ENCODE measurements at regions of chr14 and their contacts with region 1.

Region 1: DNA sequence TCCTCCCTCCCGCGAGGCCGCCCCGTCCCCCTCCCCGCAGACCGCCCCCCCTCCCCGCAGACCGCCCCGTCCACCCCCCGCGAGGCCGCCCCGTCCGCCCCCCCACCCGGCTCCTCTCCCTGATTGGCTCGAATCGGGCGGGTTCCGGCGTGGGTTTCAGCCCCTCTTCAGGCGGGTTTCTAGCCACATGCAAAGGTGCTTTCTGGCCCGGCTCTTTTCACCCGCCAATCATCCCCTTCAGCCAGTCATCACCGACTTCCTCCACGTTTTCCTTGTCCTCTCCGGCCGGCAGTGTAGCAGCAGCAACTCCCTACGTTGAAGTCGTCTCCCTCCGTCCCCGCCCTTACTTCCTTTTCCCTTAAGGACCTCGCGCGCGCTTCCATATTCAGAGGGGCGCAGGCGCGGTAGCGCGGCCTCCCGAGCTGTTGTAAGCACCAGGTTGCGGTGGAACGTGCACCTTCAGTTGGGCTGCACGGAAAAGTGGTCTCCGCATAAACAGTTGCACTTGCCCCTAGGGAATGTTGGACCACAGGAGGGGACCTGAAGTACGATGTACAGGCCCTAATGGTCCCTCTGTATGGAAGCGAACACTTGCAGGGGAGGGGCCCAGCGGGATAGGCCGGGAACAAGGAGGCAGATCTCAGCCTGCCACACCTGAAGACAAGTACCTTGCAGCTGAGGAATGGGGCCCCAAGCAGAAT is 44.6 kb upstream of the ESR2 start:
- DNase-seq: peak; percentile 76
- ATAC-seq: peak; percentile 87
- H3K4me3 Mint-ChIP-seq: peak overlapping the region; percentile 94
- H3K27ac Mint-ChIP-seq: peak overlapping the region; percentile 94
- H3K4me1 Mint-ChIP-seq: peaks cover 31% of the 10 kb centered on the region
- H3K27me3 Mint-ChIP-seq: no peaks in the 10 kb centered on the region
- CTCF ChIP-seq: no peak

Region 2: GRCh38 chr14:63641473-63642228 is 697.1 kb before region 1 on chr14 and contains the start of gene WDR89:
- CTCF ChIA-PET with region 1: no interaction called
- POLR2A ChIA-PET with region 1: interaction called, 3 read pairs
- intact Hi-C with region 1: loop called (anchors 1 kb)
- DNase-seq: peak; percentile 84
- ATAC-seq: peak; percentile 83
- H3K4me3 Mint-ChIP-seq: peak within 1 kb of the TSS; percentile 92
- H3K27ac Mint-ChIP-seq: peak within 1 kb of the TSS; percentile 98
- H3K4me1 Mint-ChIP-seq: peaks cover 34% of the 10 kb centered on the region
- H3K27me3 Mint-ChIP-seq: no peaks in the 10 kb centered on the region
- CTCF ChIP-seq: no peak
- total RNA-seq, gene WDR89: 21.9 and 24.4 TPM in 2 replicates

Region 3: GRCh38 chr14:64423987-64424386 is 85.2 kb after region 1 on chr14:
- CTCF ChIA-PET with region 1: interaction called, 17 read pairs
- POLR2A ChIA-PET with region 1: interaction called, 3 read pairs
- intact Hi-C with region 1: no loop called
- DNase-seq: no peak
- ATAC-seq: no peak
- H3K4me3 Mint-ChIP-seq: no peak overlapping the region
- H3K27ac Mint-ChIP-seq: no peak overlapping the region
- H3K4me1 Mint-ChIP-seq: no peaks in the 10 kb centered on the region
- H3K27me3 Mint-ChIP-seq: no peaks in the 10 kb centered on the region
- CTCF ChIP-seq: no peak

Region 4: GRCh38 chr14:64478634-64479250 is 140.0 kb after region 1 on chr14:
- CTCF ChIA-PET with region 1: interaction called, 67 read pairs
- POLR2A ChIA-PET with region 1: no interaction called
- intact Hi-C with region 1: no loop called
- DNase-seq: no peak
- ATAC-seq: no peak
- H3K4me3 Mint-ChIP-seq: no peak overlapping the region
- H3K27ac Mint-ChIP-seq: no peak overlapping the region
- H3K4me1 Mint-ChIP-seq: peaks cover 4% of the 10 kb centered on the region
- H3K27me3 Mint-ChIP-seq: no peaks in the 10 kb centered on the region
- CTCF ChIP-seq: peak; percentile 23

Region 5: GRCh38 chr14:64636208-64636979 is 297.6 kb after region 1 on chr14:
- CTCF ChIA-PET with region 1: interaction called, 23 read pairs
- POLR2A ChIA-PET with region 1: no interaction called
- intact Hi-C with region 1: no loop called
- DNase-seq: peak; percentile 54
- ATAC-seq: peak; percentile 93
- H3K4me3 Mint-ChIP-seq: no peak overlapping the region
- H3K27ac Mint-ChIP-seq: no peak overlapping the region
- H3K4me1 Mint-ChIP-seq: peaks cover 7% of the 10 kb centered on the region
- H3K27me3 Mint-ChIP-seq: no peaks in the 10 kb centered on the region
- CTCF ChIP-seq: peak; percentile 32

Region 6: DNA sequence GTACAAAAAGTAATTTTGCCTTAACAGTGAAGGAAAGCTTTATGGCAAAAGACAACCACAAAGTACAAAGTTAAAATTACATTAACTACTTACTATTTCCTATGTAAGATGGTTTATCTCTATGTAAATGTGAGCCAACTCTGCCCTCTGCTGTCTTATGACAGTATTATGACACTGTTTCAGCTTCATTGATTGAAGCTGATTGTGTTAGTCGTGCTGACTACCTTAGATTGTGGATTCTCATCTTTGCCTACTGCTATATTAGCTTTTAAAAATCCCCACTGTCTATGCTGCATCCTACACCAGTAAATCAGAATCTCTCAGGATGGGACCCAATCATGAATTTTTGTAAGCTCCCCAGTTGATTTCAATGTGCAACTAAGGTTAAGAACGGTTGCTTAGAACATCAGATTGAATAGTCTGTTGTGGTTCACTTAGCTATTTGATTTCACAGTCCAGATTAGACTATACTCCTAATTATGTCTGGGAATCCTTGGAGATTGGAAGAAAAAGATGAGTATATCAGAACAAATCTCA is 553.1 kb after region 1 on chr14:
- CTCF ChIA-PET with region 1: no interaction called
- POLR2A ChIA-PET with region 1: no interaction called
- intact Hi-C with region 1: loop called (anchors 5 kb)
- DNase-seq: no peak
- ATAC-seq: peak; percentile 71
- H3K4me3 Mint-ChIP-seq: no peak overlapping the region
- H3K27ac Mint-ChIP-seq: no peak overlapping the region
- H3K4me1 Mint-ChIP-seq: no peaks in the 10 kb centered on the region
- H3K27me3 Mint-ChIP-seq: peaks cover 22% of the 10 kb centered on the region
- CTCF ChIP-seq: no peak